Ovary (tissue), 10 donors: ENCODE measurements at regions of chr15 and their contacts with region 1.

Region 1: DNA sequence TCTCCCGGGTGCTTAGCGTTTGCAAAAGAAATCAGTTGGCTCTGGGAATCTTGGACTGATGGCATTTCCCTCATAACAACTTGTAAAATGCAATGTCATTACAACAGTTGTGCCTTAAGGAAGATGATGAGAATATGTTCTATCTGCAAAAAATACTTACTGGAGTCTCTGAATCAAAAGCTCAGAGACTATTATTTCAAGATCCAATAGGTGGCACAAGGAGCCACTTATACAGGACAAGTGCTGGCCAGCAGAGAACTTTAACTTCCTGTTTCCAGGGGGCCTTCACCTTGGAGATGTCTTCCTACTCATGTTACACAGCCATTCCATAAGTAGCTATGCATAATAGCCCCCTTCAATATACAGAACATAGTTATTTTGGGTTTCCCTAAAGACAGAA is 8.9 kb upstream of the RPS27L start:
- DNase-seq: no peak
- H3K4me3 ChIP-seq: no peak overlapping the region
- H3K27ac ChIP-seq: no peak overlapping the region
- H3K4me1 ChIP-seq: no peaks in the 10 kb centered on the region
- H3K27me3 ChIP-seq: no peaks in the 10 kb centered on the region
- CTCF ChIP-seq: no peak
- EP300 ChIP-seq: no peak
- POLR2A ChIP-seq: no peak

Region 2: GRCh38 chr15:62995047-62995674 is 171.1 kb before region 1 on chr15:
- intact Hi-C with region 1: no loop called
- DNase-seq: no peak
- H3K4me3 ChIP-seq: no peak overlapping the region
- H3K27ac ChIP-seq: no peak overlapping the region
- H3K4me1 ChIP-seq: no peaks in the 10 kb centered on the region
- H3K27me3 ChIP-seq: no peaks in the 10 kb centered on the region
- CTCF ChIP-seq: no peak
- EP300 ChIP-seq: no peak
- POLR2A ChIP-seq: no peak

Region 3: DNA sequence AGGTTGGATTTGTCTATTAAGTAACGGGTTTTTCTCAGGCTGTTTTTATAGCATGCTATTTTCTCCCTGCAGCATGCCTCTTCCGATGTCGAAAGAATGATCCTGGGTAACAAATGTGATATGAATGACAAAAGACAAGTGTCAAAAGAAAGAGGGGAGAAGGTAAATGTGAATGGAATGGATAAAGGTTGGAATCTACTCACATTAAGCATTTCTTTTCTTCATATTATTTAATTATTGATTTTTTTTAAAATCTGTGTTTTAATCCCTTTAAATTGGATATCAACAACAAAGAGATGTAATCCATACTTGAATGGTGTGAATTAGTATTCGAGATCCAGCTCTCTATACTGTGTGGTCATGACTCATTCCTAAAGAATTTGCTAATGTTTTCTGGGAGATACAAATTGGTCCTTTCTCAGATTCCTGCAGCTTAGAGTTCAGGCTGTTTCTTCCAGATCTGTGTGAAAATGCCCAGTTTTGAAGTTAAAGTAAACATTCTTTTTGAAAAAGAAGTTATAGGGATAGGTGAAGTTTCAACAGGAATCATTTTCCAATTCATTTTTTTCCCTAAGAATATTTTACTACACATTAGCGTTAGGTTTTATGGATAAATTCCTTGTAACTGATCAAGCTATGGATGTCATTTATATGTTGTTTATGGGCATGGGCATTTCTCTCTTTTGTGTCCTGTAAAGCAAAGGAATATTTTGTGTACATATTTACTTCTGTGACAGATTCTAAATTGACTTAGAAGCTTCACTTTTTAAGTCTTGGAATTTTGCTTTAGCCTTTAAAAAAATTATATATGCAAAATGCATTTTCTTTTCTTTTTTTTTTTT is 90.4 kb after region 1 on chr15:
- intact Hi-C with region 1: no loop called
- DNase-seq: no peak
- H3K4me3 ChIP-seq: no peak overlapping the region
- H3K27ac ChIP-seq: no peak overlapping the region
- H3K4me1 ChIP-seq: peaks cover 2% of the 10 kb centered on the region
- H3K27me3 ChIP-seq: no peaks in the 10 kb centered on the region
- CTCF ChIP-seq: no peak
- EP300 ChIP-seq: no peak
- POLR2A ChIP-seq: no peak

Region 4: GRCh38 chr15:63389902-63390670 is 223.9 kb after region 1 on chr15:
- intact Hi-C with region 1: loop called in 1 of 4 experiments (anchors 10 kb)
- DNase-seq: peak in 4 of 5 donors; percentile 25 to 45 (median 38)
- H3K4me3 ChIP-seq: no peak overlapping the region
- H3K27ac ChIP-seq: no peak overlapping the region
- H3K4me1 ChIP-seq: peaks cover 11% of the 10 kb centered on the region
- H3K27me3 ChIP-seq: no peaks in the 10 kb centered on the region
- CTCF ChIP-seq: no peak
- EP300 ChIP-seq: no peak
- POLR2A ChIP-seq: no peak